MCF 10A (cell line): ENCODE measurements at regions of chr7 and their contacts with region 1.

Region 1: GRCh38 chr7:155702616-155703015 is 58.2 kb downstream of the RBM33 start:
- DNase-seq: peak; percentile 57
- H3K4me3 Mint-ChIP-seq: no peak overlapping the region
- H3K27ac Mint-ChIP-seq: no peak overlapping the region
- H3K4me1 Mint-ChIP-seq: peaks cover 11% of the 10 kb centered on the region
- H3K27me3 Mint-ChIP-seq: no peaks in the 10 kb centered on the region
- CTCF ChIP-seq: no peak

Region 2: DNA sequence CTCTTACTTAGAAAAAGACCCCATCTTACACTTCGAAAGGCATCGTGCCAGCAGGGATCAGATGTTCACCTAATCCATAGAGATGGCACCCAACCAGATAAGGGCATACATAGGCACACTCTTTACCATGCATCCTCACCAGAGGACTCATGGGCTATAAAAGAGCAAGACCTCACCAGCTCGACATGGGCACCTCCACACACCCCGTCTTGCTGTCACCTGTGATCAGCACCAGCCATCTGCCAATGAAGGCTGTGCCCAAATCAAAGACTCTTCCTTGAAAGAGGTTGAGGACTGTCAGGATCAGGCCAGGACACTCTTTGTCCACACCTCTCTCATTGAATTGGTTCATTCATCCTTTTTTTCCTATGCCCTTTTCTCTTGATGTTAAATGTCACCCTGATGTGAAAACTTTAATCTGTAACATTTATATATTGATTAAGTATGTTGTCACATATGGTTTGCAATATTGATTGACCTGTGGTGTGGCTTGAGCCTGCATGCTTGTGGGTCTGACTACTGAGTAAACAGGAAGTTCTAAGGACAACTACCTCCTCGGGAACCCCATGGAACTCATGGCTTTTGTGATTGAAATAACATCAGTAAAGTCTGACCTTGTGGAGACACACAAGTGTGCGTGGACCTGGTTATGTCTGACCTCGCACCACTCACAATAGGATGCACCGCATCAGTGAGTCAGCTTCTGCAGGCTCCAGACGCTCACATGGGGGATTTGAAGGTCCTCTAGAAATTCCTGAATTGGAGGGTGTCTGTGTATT is 557.0 kb before region 1 on chr7:
- CTCF ChIA-PET with region 1: no interaction called
- POLR2A ChIA-PET with region 1: no interaction called
- intact Hi-C with region 1: no loop called
- DNase-seq: no peak
- H3K4me3 Mint-ChIP-seq: no peak overlapping the region
- H3K27ac Mint-ChIP-seq: no peak overlapping the region
- H3K4me1 Mint-ChIP-seq: no peaks in the 10 kb centered on the region
- H3K27me3 Mint-ChIP-seq: peaks cover 21% of the 10 kb centered on the region
- CTCF ChIP-seq: no peak

Region 3: GRCh38 chr7:155692317-155692716 is 10.3 kb before region 1 on chr7:
- CTCF ChIA-PET with region 1: interaction called, 18 read pairs
- POLR2A ChIA-PET with region 1: interaction called, 4 read pairs
- intact Hi-C with region 1: no loop called
- DNase-seq: no peak
- H3K4me3 Mint-ChIP-seq: no peak overlapping the region
- H3K27ac Mint-ChIP-seq: no peak overlapping the region
- H3K4me1 Mint-ChIP-seq: peaks cover 14% of the 10 kb centered on the region
- H3K27me3 Mint-ChIP-seq: no peaks in the 10 kb centered on the region
- CTCF ChIP-seq: no peak